ENCODE measurements at regions of chr2 and their contacts with region 1.

Region 1: GRCh38 chr2:226799181-226799975 is at the start of gene IRS1:
- DNase-seq: peak; percentile 65
- H3K4me3 Mint-ChIP-seq: peak within 1 kb of the TSS; percentile 83
- H3K27ac Mint-ChIP-seq: peak within 1 kb of the TSS; percentile 71
- H3K4me1 Mint-ChIP-seq: peaks cover 43% of the 10 kb centered on the region
- H3K27me3 Mint-ChIP-seq: peaks cover 12% of the 10 kb centered on the region
- total RNA-seq, gene IRS1: 7.2 to 7.4 TPM

Region 2: GRCh38 chr2:225668606-225669266 is 1130.6 kb before region 1 on chr2:
- CTCF ChIA-PET with region 1: interaction called, 11 read pairs
- POLR2A ChIA-PET with region 1: no interaction called
- DNase-seq: no peak
- H3K4me3 Mint-ChIP-seq: no peak overlapping the region
- H3K27ac Mint-ChIP-seq: no peak overlapping the region
- H3K4me1 Mint-ChIP-seq: no peaks in the 10 kb centered on the region
- H3K27me3 Mint-ChIP-seq: peaks cover 10% of the 10 kb centered on the region

Region 3: DNA sequence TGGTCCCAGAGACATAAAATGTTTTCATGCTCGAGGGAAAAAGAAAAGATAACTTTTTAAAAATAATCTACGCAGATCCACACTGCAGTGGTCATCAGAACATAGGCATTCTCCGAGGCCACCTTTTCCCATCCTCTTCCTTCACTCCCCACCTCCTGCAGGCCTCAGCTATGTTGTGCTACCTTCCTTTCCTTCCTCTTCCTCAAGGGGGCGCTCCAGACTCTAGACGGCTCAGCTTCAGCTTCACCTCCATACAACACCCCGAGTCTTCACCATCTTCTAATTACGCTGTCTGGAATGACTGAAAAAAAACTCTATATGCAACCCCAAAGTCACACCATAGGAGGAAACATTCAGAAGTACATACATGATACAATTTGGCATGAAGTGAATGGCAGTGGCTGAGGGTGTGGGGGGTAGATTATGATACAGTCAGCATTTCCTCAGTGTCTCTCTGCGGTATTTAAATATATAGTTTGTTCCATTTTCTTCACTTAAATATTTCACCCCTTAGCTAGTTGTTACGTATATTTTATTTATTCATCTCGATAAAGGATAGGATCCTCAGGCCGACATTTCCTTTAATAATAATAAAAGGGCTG is 583.4 kb before region 1 on chr2:
- CTCF ChIA-PET with region 1: interaction called, 50 read pairs
- POLR2A ChIA-PET with region 1: no interaction called
- DNase-seq: peak; percentile 64
- H3K4me3 Mint-ChIP-seq: no peak overlapping the region
- H3K27ac Mint-ChIP-seq: no peak overlapping the region
- H3K4me1 Mint-ChIP-seq: no peaks in the 10 kb centered on the region
- H3K27me3 Mint-ChIP-seq: peaks cover 4% of the 10 kb centered on the region

Region 4: GRCh38 chr2:226644399-226644865 is 154.9 kb before region 1 on chr2:
- CTCF ChIA-PET with region 1: no interaction called
- POLR2A ChIA-PET with region 1: no interaction called
- DNase-seq: no peak
- H3K4me3 Mint-ChIP-seq: no peak overlapping the region
- H3K27ac Mint-ChIP-seq: no peak overlapping the region
- H3K4me1 Mint-ChIP-seq: peaks cover 6% of the 10 kb centered on the region
- H3K27me3 Mint-ChIP-seq: peaks cover 8% of the 10 kb centered on the region

Region 5: DNA sequence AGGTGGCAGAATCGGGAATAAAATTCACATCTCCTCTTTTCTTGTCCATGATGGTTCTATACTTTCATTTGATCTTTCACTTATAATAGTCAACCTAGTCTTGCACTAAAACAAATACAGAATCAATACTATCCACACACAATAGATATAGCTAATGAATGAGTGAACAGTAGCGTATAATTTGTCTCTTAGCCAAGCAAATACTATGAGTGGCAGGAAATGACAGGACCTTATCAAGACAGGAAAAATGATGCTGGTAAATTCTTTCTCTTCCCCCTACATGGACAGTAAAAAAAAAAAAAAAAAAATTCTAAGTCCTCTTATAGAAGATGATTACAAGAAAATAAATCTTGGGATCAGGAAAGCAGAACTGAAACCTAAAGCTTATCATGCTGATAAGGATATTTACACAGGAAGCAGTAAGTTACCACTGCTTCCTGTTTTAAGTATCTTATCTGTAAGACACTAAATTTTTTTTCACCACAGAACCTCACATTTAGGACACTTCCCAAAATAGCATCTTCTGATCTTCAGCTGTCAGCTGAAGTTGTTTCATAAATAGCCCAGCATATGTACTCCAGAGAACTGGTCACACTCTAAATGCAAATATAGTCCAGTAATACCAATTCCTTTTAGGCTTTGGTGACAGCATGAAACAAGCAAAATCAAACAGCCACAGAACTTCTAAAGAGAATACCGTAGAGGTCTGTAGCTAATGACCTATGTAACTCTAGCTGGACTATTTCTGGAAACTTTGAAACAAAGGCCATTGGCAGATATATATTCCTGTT is 26.8 kb before region 1 on chr2:
- CTCF ChIA-PET with region 1: interaction called, 14 read pairs
- POLR2A ChIA-PET with region 1: interaction called, 4 read pairs
- DNase-seq: no peak
- H3K4me3 Mint-ChIP-seq: peak overlapping the region; percentile 45
- H3K27ac Mint-ChIP-seq: peak overlapping the region; percentile 69
- H3K4me1 Mint-ChIP-seq: peaks cover 30% of the 10 kb centered on the region
- H3K27me3 Mint-ChIP-seq: no peaks in the 10 kb centered on the region

Region 6: GRCh38 chr2:226835796-226836547 is 36.6 kb after region 1 on chr2 and contains the start of gene RHBDD1:
- CTCF ChIA-PET with region 1: interaction called, 60 read pairs
- POLR2A ChIA-PET with region 1: interaction called, 49 read pairs
- DNase-seq: peak; percentile 96
- H3K4me3 Mint-ChIP-seq: peak within 1 kb of the TSS; percentile 97
- H3K27ac Mint-ChIP-seq: peak within 1 kb of the TSS; percentile 100
- H3K4me1 Mint-ChIP-seq: peaks cover 60% of the 10 kb centered on the region
- H3K27me3 Mint-ChIP-seq: no peaks in the 10 kb centered on the region
- total RNA-seq, gene RHBDD1: 38.1 to 43.0 TPM

Region 7: DNA sequence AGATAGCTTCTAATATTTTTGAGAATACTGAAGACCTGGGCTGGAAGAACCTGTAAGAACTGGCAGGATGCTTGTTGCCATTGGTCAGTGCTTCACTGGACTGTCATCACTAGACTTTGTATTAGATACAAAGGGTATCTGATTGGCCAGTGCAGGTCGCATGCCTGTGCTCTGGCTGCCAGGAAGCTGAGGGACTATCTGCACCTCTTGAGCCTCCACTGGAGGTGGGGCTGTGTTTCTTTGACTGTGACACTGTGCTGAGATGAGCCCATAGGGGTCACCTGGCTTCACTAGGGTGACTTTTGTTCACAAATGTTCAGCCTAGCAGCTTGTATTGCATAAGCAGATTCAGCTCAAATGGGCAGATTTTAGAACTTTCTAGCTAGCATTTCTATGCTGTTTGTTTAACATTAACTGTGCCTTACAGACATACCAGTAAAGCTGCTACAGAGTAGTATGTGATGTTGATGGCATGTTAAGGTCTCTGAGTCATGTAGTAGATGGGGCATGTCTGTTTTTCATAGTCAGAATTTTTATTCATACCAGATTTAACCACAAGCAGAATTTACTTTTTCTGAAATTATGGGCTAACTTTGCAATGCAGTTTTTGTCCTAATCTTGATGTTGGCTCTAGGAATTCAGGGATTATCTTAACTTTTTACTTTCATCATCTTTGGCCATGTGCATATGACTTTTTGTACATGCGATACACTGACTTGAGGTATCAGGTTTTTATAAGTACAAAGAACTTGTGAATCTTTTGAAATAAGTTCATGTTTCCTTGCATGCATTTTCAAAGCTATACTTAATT is 92.6 kb after region 1 on chr2:
- CTCF ChIA-PET with region 1: no interaction called
- POLR2A ChIA-PET with region 1: no interaction called
- DNase-seq: no peak
- H3K4me3 Mint-ChIP-seq: no peak overlapping the region
- H3K27ac Mint-ChIP-seq: no peak overlapping the region
- H3K4me1 Mint-ChIP-seq: no peaks in the 10 kb centered on the region
- H3K27me3 Mint-ChIP-seq: no peaks in the 10 kb centered on the region

Measured in activated CD4-positive, alpha-beta memory T cell treated with anti-CD3 and anti-CD28 coated beads, Interleukin-2, amount 10 ng/mL, durations not matched to agents 7 days and 5 days (primary cell).